Right ventricle myocardium inferior (tissue), 1 donor: ENCODE measurements at regions of chr14 and their contacts with region 1.

Region 1: DNA sequence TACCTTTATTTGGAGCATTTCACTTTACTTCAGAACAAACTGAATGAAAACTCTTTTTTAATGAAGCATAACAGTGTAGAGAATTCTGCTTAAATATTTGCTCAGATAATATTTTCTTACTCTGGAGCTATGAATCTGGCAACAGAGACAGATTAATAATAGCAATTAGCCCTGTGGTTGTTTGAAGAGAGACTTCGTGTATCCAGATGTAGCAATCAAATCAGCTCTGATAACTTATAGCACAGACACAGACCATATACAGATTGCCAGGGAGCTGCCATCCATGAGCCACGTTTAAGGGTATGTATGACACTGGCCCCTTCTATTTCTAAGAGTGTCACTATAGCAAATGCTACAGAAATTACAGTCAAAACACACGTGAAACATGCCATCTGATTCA is 146.6 kb downstream of the EXOC5 start:
- DNase-seq: no peak
- ATAC-seq: no peak

Region 2: GRCh38 chr14:57139173-57139572 is 17.0 kb after region 1 on chr14:
- intact Hi-C with region 1: loop called (anchors 1 kb)
- DNase-seq: no peak
- ATAC-seq: no peak